Posterior vena cava (tissue), 2 donors: ENCODE measurements at regions of chr13 and their contacts with region 1.

Region 1: DNA sequence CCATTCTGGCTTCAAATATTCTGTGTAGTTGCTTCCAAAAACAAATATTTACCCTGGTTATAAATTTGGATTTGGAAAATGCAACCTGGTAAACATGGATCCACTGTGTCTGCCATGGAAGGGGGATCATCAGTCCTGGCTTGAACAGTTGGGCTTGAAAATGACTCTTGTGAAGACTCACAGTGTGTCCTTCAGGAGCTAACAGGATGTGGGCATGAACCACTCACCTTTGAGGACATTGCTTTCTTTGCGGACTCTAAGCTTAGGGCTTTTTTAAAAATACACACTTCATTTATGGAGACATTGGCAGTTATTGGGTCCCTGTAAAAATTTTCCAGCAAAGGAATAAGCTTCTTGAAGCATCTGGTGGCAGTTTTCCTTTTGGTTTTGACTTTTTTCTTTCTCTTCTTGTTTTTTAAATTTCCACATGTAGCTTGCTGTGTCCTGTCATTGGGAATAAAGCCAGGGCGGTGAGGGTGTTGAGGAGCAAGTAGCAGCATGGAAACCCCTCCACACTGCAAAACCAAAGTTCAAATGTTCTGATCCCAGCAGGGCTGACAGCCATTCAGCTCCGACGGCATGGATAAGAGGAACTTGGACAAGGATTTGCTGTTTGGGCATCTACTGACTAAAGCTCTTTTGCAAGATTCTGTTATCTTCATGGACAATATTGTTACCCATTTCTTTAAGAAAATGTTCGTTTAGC is 39.5 kb upstream of the SERP2 start:
- DNase-seq: no peak

Region 2: DNA sequence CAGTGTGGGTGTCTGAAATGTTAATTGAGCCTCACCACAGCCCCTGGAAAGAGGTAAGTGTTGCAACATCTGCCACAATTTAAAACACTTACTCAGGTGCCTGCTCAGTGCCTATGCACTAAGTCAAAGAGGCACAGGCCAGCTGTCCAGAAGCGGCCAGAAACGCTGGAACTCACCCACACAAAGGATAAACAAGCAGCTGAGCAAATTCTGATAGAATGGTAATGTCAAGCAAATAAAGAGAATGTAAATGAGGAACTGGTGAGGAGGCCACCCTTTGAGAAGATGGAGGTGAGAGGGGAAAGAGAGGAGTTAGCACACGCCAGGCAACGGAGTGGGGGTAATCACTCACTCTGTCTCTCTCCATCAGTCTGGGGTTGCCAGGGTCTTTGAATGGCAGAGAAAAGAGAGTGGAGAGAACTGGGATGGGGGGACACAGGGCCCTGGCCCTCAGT is 28.2 kb before region 1 on chr13:
- intact Hi-C with region 1: loop called in 1 of 2 experiments (anchors 1 kb)
- DNase-seq: no peak

Region 3: DNA sequence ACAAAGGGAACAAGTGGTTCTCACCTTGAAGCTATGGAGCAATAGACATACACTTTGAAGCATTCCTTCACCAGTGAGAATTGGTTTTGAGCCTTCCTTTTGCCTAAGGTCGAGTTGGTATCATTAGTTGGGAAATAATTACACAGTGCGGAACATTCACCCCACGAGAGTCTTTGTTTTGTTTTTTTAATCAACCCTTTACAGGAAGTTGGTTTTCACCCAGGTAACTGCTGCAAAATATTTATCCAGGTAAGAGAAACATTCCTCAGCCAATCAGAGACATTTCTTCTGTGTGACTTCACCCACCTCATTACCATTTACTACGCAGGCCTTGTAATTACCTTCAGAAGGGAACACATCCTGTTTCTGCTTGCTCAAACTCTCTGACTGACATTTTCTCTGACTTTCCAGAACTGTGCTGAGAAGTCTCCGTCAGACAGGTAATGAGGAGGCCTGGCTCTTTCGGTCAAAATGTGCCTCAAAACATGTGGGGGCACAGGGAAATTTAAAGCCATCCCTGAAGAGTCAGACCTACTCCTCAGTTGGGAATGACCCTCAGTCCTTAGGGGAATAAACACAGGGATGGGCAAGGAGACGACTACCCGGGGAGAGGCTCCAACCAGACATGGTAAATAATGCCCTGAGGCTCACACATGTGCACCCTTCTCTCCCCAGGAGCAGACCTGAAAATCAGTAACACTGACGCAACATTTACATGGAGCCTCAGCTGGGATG is 16.8 kb after region 1 on chr13:
- intact Hi-C with region 1: no loop called
- DNase-seq: no peak